Esophagus muscularis mucosa (tissue), 4 donors: ENCODE measurements at regions of chr1 and their contacts with region 1.

Region 1: DNA sequence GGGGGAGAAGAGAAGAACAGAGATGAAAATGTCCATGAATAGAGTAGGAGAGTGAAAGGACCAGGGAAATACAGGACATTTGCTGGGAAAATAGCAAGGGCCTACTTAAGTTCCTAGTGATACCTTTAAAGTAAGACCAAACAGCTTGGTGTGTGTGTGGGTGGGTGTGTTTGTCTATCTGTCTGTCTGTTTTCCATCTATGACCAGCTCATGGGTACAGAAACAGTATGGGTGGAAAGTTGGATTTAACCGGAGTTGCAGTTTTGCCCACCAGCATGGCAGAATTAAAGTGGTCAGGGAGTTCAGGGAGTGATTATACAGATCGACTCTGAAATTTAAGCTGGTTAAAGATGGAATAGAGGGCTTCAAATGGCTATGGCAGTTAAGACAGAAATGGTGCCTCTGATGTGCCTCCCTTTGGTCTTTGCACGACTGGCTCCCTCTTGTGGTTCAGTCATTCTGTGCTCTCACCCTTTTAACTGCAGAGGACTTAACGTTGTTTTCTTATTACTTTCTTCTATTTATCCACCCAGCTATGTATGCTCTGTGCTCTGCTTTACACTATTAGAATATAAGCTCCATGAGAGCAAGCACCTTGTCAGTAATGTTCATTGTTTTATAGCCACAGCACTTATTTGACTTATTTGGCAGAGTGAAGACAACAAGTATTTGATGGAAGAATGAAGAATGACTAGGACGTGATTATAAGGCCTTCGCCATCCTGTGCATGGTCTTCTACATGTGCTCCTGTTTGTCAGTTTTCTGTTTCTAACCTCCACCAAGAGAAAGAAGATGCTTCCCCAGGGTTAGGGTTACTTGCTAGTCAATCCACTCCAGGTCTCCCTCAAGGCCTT is 72.7 kb upstream of the AK4 start:
- DNase-seq: no peak
- H3K4me3 ChIP-seq: no peak overlapping the region
- H3K27ac ChIP-seq: no peak overlapping the region
- H3K4me1 ChIP-seq: no peaks in the 10 kb centered on the region
- H3K27me3 ChIP-seq: no peaks in the 10 kb centered on the region
- CTCF ChIP-seq: peak; percentile 68 to 85 (median 71)
- EP300 ChIP-seq: no peak
- POLR2A ChIP-seq: no peak

Region 2: GRCh38 chr1:64864018-64864940 is 211.1 kb before region 1 on chr1:
- intact Hi-C with region 1: loop called (anchors 10 kb)
- DNase-seq: no peak
- H3K4me3 ChIP-seq: no peak overlapping the region
- H3K27ac ChIP-seq: peak overlapping the region in 3 of 4 donors; percentile 10 to 52 (median 48)
- H3K4me1 ChIP-seq: peaks cover 0 to 10% (median 3%) of the 10 kb centered on the region in 4 donors
- H3K27me3 ChIP-seq: no peaks in the 10 kb centered on the region
- CTCF ChIP-seq: no peak
- EP300 ChIP-seq: no peak
- POLR2A ChIP-seq: no peak

Region 3: GRCh38 chr1:65195495-65196417 is 120.4 kb after region 1 on chr1:
- intact Hi-C with region 1: no loop called
- DNase-seq: no peak
- H3K4me3 ChIP-seq: no peak overlapping the region
- H3K27ac ChIP-seq: no peak overlapping the region
- H3K4me1 ChIP-seq: peaks cover 4 to 26% (median 11%) of the 10 kb centered on the region in 4 donors
- H3K27me3 ChIP-seq: no peaks in the 10 kb centered on the region
- CTCF ChIP-seq: no peak
- EP300 ChIP-seq: no peak
- POLR2A ChIP-seq: no peak